MCF 10A (cell line): ENCODE measurements at regions of chr19 and their contacts with region 1.

Region 1: GRCh38 chr19:45059278-45059965 is 16.9 kb downstream of the ZNF296 start:
- DNase-seq: peak; percentile 87
- H3K4me3 Mint-ChIP-seq: no peak overlapping the region
- H3K27ac Mint-ChIP-seq: no peak overlapping the region
- H3K4me1 Mint-ChIP-seq: peaks cover 11% of the 10 kb centered on the region
- H3K27me3 Mint-ChIP-seq: no peaks in the 10 kb centered on the region
- CTCF ChIP-seq: peak; percentile 90

Region 2: GRCh38 chr19:44587963-44588770 is 471.3 kb before region 1 on chr19:
- CTCF ChIA-PET with region 1: no interaction called
- POLR2A ChIA-PET with region 1: no interaction called
- intact Hi-C with region 1: loop called (anchors 5 kb)
- DNase-seq: peak; percentile 88
- H3K4me3 Mint-ChIP-seq: peak overlapping the region; percentile 21
- H3K27ac Mint-ChIP-seq: peak overlapping the region; percentile 99
- H3K4me1 Mint-ChIP-seq: peaks cover 25% of the 10 kb centered on the region
- H3K27me3 Mint-ChIP-seq: no peaks in the 10 kb centered on the region
- CTCF ChIP-seq: peak; percentile 52

Region 3: DNA sequence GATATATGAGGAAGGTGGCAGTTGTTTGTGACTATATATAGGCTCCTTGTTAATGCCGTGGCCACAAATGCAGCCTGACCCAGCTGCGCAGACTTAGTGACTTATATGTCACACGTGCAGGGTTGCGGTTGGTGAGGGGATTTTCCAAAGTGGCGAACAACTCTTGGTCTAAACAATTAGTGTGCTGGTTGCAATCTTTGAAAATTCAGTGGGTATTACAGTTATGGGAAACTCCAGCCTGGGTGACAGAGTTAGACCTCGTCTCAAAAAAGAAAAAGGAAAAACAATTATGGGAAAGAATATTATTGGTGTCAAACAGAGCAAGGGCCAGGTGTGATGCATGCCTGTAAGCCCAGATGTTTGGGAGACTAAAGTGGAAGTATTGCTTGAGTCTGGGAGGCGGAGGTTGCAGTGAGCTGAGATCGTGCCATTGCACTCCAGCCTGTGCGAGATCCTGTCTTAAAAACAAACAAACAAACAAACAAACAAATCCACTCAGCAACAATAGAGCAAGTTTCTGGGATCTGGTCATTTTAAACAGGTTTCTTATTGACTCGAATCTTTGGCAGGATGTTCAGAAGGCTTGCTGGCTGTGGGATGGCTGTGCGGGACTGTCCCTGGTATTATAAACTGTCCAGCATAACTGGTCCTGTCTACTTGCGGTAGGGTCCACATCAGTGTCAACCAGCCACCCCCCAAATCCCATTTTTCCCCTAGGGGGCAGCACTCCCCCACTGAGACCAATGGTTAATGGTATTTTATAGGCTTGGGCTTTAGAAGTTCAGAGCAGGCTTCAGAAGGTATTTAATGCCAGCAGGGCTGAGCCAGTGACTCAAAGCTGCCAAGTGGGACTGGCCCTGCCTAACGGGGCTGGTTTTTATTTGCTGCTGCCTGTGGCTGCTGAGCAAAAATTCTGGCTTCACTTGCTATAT is 42.8 kb before region 1 on chr19:
- CTCF ChIA-PET with region 1: no interaction called
- POLR2A ChIA-PET with region 1: no interaction called
- intact Hi-C with region 1: loop called (anchors 1 kb)
- DNase-seq: peak; percentile 72
- H3K4me3 Mint-ChIP-seq: no peak overlapping the region
- H3K27ac Mint-ChIP-seq: no peak overlapping the region
- H3K4me1 Mint-ChIP-seq: peaks cover 9% of the 10 kb centered on the region
- H3K27me3 Mint-ChIP-seq: no peaks in the 10 kb centered on the region
- CTCF ChIP-seq: peak; percentile 39

Region 4: DNA sequence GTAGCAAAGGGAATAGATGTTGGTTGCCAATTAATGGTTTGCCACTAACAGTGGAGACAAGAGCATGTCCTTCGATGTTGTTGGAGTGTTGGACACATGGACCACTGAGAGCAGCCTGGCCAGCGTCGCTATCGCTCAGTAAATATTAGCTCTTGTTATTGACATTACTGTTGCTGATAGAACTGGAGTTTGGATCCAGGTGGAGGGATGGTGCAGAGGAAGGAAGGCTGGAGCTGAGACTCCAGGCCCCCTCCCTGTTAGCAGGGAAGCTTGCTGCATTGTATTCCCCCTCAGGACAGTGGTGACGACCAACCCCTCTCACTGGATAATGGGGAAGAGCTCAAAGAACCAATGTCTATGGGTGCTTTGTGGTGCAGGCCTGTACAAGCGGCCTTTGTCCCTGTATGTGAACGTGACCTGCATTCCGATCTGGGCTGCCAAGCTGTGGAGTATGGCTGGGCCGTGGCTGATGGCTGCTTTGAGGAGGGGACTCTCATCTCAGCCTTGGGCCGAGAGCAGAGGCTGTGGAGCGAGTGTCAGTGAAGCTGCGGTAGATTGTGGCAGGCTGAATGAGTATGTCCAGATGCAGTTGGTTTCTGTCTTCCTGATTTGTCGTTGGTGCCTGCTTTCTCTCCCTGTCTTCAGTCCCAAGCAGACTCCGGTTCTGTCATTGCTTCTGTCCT is 13.6 kb before region 1 on chr19:
- CTCF ChIA-PET with region 1: interaction called, 24 read pairs
- POLR2A ChIA-PET with region 1: interaction called, 3 read pairs
- intact Hi-C with region 1: no loop called
- DNase-seq: no peak
- H3K4me3 Mint-ChIP-seq: no peak overlapping the region
- H3K27ac Mint-ChIP-seq: no peak overlapping the region
- H3K4me1 Mint-ChIP-seq: peaks cover 26% of the 10 kb centered on the region
- H3K27me3 Mint-ChIP-seq: no peaks in the 10 kb centered on the region
- CTCF ChIP-seq: no peak

Region 5: DNA sequence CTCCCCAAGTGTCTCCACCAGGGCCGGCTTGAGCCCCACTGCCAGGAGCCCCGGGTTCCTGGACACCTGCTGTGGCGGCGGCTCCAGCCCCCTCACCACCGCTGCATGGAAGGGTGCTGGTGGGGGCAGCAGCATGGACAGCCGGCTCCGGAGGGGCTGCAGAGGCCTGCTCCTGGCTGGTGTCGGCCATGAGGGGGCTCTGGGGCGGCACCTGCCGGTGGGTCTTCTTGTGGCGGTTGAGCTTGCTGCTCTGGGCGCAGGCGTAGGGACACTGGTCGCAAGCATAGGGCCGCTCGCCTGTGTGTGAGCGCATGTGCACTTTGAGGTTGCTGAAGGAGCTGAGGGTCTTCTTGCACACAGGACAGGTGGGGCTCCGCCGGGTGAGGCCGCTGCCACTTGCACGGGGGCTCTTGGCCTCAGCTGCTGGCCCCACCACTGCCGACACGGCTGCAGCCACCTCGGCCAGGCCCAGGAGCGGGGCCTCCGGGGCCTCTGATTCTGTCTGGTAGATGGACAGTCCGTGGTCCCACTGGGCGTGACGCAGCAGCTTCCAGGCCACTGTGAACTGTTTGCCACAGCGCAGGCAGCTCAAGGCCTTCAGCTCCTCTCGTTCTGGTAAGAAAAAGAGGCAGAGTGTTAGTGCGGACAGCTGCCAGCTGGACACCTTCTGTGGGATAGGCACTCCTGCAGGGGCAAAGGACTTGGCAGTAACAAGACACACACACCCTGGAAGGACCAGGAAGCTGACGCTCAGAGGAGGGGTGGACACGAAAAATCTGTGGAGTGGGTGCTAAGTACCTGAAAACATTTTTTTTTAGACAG is 12.8 kb after region 1 on chr19:
- CTCF ChIA-PET with region 1: interaction called, 13 read pairs
- POLR2A ChIA-PET with region 1: interaction called, 3 read pairs
- intact Hi-C with region 1: no loop called
- DNase-seq: no peak
- H3K4me3 Mint-ChIP-seq: no peak overlapping the region
- H3K27ac Mint-ChIP-seq: no peak overlapping the region
- H3K4me1 Mint-ChIP-seq: peaks cover 7% of the 10 kb centered on the region
- H3K27me3 Mint-ChIP-seq: no peaks in the 10 kb centered on the region
- CTCF ChIP-seq: no peak